GM10248 (cell line): ENCODE measurements at regions of chr9 and their contacts with region 1.

Region 1: GRCh38 chr9:133782157-133783130 is 44.3 kb upstream of the SARDH start:
- DNase-seq: peak; percentile 76
- CTCF ChIP-seq: peak; percentile 88

Region 2: GRCh38 chr9:133609311-133610098 is 172.9 kb before region 1 on chr9 and contains the start of gene FAM163B:
- CTCF ChIA-PET with region 1: no interaction called
- POLR2A ChIA-PET with region 1: no interaction called
- DNase-seq: no peak
- CTCF ChIP-seq: no peak

Region 3: DNA sequence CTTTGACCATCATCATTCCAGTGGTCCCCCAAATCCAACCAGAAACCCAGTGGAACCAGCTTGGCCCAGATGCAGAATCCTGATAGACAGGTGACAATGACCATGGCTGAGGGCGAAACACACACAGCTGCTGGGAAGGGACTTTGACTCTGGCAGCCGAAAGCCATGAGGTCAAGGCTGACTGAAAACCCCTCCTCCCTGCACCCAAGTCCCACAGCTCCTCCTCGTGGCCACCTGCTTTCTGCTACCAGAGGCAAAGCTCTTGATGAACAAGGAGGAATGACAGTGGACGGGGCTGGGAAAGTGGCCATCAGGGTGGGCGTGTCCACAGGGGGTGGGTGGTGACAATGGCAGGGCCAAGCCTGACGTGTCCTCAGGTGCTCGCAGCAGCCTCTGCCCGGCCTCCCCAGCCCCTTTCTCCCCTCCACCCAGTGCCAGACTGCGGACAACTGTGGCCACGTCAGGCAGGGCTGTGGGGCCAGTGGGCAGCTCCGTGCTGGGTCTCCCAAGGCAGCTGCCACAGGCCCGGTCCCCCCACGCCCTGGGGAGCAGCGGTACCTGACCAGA is 13.5 kb before region 1 on chr9:
- CTCF ChIA-PET with region 1: interaction called, 75 read pairs
- POLR2A ChIA-PET with region 1: no interaction called
- DNase-seq: no peak
- CTCF ChIP-seq: no peak

Region 4: DNA sequence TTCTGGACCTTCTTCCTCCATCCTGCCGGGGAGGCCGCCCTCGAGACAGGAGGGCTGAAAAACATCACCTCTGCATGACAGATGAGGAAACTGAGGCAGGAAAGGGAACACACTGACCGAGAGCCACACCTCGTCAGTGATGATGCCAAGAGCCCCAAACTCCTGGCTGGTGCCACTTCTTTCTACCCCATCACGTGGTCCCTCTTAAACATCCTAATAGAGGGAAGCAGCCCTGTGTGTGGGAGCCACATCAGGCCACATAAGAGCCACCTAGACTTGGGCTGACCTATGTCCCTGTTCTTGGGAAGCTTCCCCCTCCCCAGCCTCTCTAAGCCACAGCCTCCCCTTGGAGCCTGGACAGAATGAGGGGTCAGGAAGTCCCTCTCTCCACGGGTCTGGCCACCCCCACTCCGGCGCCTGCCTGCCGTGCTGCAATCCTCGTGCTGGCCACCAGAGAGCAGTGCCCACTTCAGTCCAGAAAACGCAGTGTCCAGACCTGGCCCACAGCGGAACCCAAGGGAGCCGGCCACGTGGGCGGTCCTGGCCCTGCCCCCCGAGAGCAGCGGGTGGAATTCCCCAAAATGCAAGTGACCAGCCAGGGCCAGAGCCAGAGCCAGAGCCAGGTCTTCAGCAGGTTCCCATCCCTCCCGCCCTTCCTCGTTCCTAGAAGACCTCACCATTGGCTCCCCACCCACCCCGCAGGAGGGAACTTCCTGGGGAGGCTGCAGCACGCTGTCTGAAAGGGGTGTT is 10.5 kb after region 1 on chr9:
- CTCF ChIA-PET with region 1: interaction called, 25 read pairs
- POLR2A ChIA-PET with region 1: no interaction called
- DNase-seq: peak; percentile 89
- CTCF ChIP-seq: peak; percentile 92

Region 5: DNA sequence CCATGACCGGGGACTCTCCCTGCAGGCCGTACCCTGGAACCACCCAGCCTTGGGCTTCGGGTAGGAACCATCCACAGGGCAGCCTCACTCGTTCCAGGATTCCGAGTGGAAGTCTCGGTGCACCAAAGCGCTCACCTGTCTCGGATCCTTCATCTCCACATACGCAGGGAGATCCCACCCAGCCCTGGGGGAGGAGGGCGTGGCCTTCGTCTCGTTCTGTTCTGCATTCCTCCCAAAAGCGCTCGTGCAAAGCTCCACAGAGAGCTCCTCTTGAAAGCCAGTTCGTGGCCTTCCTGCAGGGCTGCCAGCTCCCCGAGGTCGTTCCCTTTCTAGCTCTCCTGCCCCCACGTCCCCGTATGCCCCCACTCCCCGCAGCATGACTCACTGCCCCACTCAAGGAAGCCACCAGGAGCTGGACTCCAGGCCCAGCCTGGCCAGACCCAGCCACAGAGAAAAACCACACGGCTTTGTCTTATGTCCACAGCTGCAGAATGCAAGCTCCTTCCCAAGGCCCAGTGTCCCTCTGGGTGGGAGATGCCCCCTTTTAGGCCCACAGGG is 20.7 kb after region 1 on chr9:
- CTCF ChIA-PET with region 1: interaction called, 25 read pairs
- POLR2A ChIA-PET with region 1: no interaction called
- DNase-seq: no peak
- CTCF ChIP-seq: no peak

Region 6: DNA sequence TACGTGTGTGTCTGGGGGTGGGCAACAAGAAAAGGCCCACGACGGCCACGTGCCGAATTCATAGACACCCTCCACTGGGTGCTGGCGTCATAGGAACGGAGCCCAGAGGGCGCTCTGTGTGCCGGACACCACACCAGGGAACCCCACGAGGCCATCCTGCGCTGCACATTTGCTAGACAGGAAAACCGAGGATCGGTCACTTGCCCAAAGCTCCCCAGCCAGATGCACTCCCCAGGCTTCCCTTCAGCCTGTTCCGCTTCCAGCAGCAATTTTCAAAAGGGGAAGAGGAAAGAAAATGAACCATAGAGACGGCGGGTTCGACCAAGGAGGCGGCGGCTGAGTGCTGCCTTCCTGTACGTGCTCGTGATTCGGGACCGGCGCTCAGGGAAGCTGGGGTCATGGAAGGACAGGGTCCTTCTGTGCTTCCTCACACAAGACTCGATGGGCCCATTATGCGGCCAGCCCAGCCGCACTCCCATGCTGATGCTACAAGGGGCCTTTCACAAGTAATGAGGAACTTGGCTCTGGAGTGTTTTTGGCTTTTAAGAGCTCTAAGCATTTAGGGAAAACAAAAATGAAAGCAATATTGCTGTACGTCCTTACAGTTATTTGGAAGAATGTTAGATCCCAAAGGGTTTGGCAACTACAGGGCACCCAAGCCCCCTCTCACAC is 80.3 kb after region 1 on chr9:
- CTCF ChIA-PET with region 1: no interaction called
- POLR2A ChIA-PET with region 1: no interaction called
- DNase-seq: no peak
- CTCF ChIP-seq: no peak

Region 7: GRCh38 chr9:133935328-133936040 is 153.0 kb after region 1 on chr9:
- CTCF ChIA-PET with region 1: no interaction called
- POLR2A ChIA-PET with region 1: no interaction called
- DNase-seq: no peak
- CTCF ChIP-seq: no peak